ENCODE measurements at regions of chr3 and their contacts with region 1.

Region 1: GRCh38 chr3:36579746-36580145 is 184.6 kb downstream of the DCLK3 start:
- DNase-seq: no peak
- ATAC-seq: no peak

Region 2: DNA sequence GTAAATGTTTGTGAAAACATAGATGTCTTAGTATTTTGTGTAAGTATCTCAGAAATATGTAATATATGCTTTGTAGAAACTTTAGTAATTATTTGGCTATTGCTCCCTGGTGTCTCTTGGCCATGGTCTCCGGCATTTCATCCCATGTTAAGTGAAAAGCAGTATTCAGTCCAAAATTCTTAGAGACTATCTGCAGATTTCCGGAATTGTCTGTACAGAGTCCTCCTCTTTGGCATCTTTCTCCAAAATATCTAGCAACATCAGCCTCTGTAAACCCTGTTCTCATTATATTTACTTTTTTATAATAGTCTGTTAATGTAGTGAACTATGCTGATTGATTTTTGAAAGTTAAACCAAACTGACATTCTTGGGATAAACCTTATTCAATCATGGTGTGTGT is 587.7 kb before region 1 on chr3:
- intact Hi-C with region 1: loop called (anchors 5 kb)
- DNase-seq: no peak
- ATAC-seq: no peak